Activated B cell treated with CpG ODN at 0.5 μM for 24 hours (primary cell): ENCODE measurements at regions of chr3 and their contacts with region 1.

Region 1: GRCh38 chr3:71512000-71512399 is 71.5 kb downstream of the FOXP1 start:
- DNase-seq: no peak
- ATAC-seq: peak; percentile 97
- H3K4me3 Mint-ChIP-seq: peak overlapping the region; percentile 5
- H3K27ac Mint-ChIP-seq: no peak overlapping the region
- H3K4me1 Mint-ChIP-seq: peaks cover 22% of the 10 kb centered on the region
- H3K27me3 Mint-ChIP-seq: no peaks in the 10 kb centered on the region
- CTCF ChIP-seq: no peak

Region 2: GRCh38 chr3:70550723-70551319 is 961.2 kb before region 1 on chr3:
- CTCF ChIA-PET with region 1: interaction called, 8 read pairs
- POLR2A ChIA-PET with region 1: no interaction called
- intact Hi-C with region 1: loop called (anchors 1 kb)
- DNase-seq: peak; percentile 61
- ATAC-seq: peak; percentile 75
- H3K4me3 Mint-ChIP-seq: no peak overlapping the region
- H3K27ac Mint-ChIP-seq: no peak overlapping the region
- H3K4me1 Mint-ChIP-seq: no peaks in the 10 kb centered on the region
- H3K27me3 Mint-ChIP-seq: peaks cover 4% of the 10 kb centered on the region
- CTCF ChIP-seq: no peak

Region 3: GRCh38 chr3:71226565-71227269 is 285.3 kb before region 1 on chr3:
- CTCF ChIA-PET with region 1: no interaction called
- POLR2A ChIA-PET with region 1: interaction called, 3 read pairs
- intact Hi-C with region 1: loop called (anchors 5 kb)
- DNase-seq: peak; percentile 50
- ATAC-seq: peak; percentile 76
- H3K4me3 Mint-ChIP-seq: peak overlapping the region; percentile 89
- H3K27ac Mint-ChIP-seq: peak overlapping the region; percentile 97
- H3K4me1 Mint-ChIP-seq: peaks cover 76% of the 10 kb centered on the region
- H3K27me3 Mint-ChIP-seq: no peaks in the 10 kb centered on the region
- CTCF ChIP-seq: no peak

Region 4: GRCh38 chr3:71389911-71390573 is 122.0 kb before region 1 on chr3:
- CTCF ChIA-PET with region 1: no interaction called
- POLR2A ChIA-PET with region 1: interaction called, 10 read pairs
- intact Hi-C with region 1: loop called (anchors 2 kb)
- DNase-seq: no peak
- ATAC-seq: peak; percentile 6
- H3K4me3 Mint-ChIP-seq: peak overlapping the region; percentile 73
- H3K27ac Mint-ChIP-seq: peak overlapping the region; percentile 99
- H3K4me1 Mint-ChIP-seq: peaks cover 86% of the 10 kb centered on the region
- H3K27me3 Mint-ChIP-seq: no peaks in the 10 kb centered on the region
- CTCF ChIP-seq: no peak

Region 5: DNA sequence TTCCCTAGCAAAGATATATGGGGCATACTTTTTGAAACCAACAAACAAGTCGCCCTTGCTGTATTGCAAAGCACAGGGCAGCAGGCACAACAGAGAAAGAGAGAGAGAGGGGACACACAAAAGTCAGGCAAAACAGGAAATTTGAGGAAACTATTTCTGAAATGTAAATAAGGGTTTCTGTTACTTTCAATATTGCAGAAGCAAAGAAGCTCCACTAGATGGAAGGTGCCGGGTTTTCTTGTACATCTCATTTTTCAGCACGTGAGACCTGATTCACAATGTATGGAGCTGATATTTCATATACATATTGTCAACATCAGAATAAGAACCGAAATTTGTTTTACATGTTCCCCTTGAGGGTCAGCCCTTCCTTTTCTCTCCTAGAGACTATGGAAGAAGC is 55.8 kb before region 1 on chr3:
- CTCF ChIA-PET with region 1: interaction called, 3 read pairs
- POLR2A ChIA-PET with region 1: interaction called, 3 read pairs
- intact Hi-C with region 1: loop called (anchors 2 kb)
- DNase-seq: no peak
- ATAC-seq: peak; percentile 35
- H3K4me3 Mint-ChIP-seq: peak overlapping the region; percentile 66
- H3K27ac Mint-ChIP-seq: peak overlapping the region; percentile 88
- H3K4me1 Mint-ChIP-seq: peaks cover 76% of the 10 kb centered on the region
- H3K27me3 Mint-ChIP-seq: no peaks in the 10 kb centered on the region
- CTCF ChIP-seq: no peak